ENCODE measurements at regions of chr19 and their contacts with region 1.

Region 1: DNA sequence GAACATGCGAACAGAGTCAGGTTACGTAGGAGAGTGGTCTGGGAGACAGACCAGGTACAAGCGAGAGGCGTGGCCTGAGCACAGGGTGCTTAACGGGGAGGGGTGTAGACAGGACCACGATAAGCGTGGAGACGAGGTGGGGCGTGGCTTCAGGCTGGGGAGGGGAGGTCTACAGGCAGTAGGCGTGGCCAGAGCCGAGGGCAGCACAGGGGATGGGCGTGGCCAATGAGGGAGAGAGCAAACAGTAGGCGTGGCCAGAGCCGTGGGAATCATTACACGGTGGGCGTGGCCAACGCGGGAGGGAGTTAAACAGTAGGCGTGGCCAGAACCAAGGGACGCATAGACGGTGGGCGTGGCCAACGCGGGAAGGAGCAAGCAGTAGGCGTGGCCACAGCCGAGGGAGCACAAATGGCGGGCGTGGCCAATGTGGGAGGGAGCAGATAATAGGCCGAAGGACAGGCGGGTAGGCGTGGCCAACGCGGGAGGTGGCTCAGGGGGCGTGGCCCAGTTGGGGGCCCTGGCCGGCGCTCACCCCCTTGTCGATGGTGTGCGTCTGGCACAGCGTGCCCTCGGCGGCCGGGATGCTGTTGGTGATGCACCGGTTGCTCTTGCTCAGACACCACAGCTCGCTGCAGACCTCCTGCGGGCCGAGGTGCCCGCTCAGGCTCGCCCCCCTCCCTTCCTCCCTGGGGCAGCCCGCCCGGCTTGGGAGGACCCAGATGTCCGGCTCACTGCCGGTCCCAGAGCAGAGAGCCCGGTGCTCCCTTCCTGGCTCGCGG is 15.2 kb upstream of the MYO1F start:
- DNase-seq: peak; percentile 60 to 98
- ATAC-seq: peak; percentile 82 to 93
- H3K4me3 ChIP-seq: peak overlapping the region; percentile 42
- H3K27ac ChIP-seq: peak overlapping the region; percentile 80 to 95
- H3K4me1 ChIP-seq: peaks cover 25% of the 10 kb centered on the region
- CTCF ChIP-seq: no peak
- EP300 ChIP-seq: no peak
- POLR2A ChIP-seq: 0 out of 2 replicates have a peak, but pooled peaks have one; percentile 19
- RAD21 ChIP-seq: no peak

Region 2: DNA sequence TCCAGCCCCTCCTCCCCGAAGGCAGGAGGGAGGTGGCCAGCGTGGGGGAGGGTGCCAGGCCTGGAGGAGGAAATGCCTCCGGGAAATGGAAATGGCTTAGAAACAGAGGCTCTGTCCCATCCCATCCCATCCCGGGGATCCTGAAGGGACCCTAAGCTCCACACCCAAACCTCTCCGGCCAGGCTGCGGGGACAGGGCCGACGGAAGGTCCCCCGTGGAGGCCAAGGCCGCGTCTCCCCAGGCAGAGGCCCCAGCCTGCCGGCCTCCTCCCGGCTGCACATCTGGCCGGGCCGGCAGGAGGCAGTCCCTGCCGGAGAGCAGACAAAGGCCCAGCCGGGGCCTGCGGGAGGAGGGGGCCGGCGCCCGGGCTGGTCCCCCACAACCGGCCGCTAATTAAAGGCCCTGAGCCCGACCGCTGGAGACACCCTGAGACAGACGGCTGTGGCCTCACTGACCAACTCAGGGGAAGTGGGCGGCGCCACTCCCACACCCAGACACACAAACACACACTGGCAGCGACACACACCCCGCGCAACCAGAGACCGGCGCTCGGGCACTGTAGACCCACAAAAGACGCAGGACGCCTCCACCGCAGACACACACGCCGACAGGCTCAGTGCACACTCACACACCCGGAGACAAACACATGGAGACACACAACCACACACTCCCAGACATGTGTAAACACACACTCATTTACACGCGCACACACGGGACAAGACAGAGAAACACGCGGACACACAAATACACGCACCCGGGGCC is 17.0 kb after region 1 on chr19:
- CTCF ChIA-PET with region 1: interaction called, 32 read pairs
- POLR2A ChIA-PET with region 1: interaction called, 6 read pairs
- DNase-seq: peak; percentile 44 to 91
- ATAC-seq: peak; percentile 72
- H3K4me3 ChIP-seq: peak overlapping the region; percentile 58
- H3K27ac ChIP-seq: peak overlapping the region; percentile 98 to 99
- H3K4me1 ChIP-seq: peaks cover 45% of the 10 kb centered on the region
- CTCF ChIP-seq: no peak
- EP300 ChIP-seq: no peak
- POLR2A ChIP-seq: no peak
- RAD21 ChIP-seq: peak in 1 of 2 experiments; percentile 16; a peak in 1 of 5 replicates

Region 3: DNA sequence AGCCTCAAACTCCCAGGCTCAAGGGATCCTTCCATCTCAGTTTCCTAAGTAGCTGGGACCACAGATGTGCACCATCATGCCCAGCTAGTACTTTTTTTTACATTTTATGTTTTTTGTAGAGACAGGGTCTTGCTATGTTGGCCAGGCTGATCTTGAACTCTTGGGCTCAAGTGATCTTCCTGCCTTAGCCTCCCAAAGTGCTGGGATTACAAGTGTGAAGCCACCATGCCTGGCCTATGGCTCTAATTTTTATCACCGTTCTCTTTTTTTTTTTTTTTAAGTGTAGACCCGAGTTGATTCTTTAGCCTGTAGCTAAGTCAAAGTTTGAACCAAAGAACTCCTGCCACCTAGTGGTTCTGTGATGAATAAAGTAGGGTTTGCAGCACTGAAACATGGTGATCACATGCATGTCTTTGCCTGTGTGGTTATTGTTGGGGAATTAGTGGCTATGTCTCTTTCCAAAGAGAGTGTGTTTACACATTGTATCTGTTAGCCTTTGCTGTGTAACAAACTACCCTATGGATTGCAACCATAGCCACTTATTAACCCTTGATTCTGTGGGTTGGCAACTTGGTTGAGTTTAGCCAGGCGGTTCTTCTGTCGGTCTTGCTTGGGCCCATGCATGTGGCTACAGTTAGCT is 49.6 kb after region 1 on chr19:
- CTCF ChIA-PET with region 1: interaction called, 10 read pairs
- POLR2A ChIA-PET with region 1: no interaction called
- DNase-seq: peak; percentile 38 to 68
- ATAC-seq: no peak
- H3K4me3 ChIP-seq: no peak overlapping the region
- H3K27ac ChIP-seq: peak overlapping the region; percentile 94 to 98
- H3K4me1 ChIP-seq: peaks cover 36% of the 10 kb centered on the region
- CTCF ChIP-seq: 0 out of 3 replicates have a peak, but pooled peaks have one; percentile 14
- EP300 ChIP-seq: no peak
- POLR2A ChIP-seq: no peak
- RAD21 ChIP-seq: peak in 1 of 2 experiments; percentile 58; a peak in 3 of 5 replicates

Region 4: DNA sequence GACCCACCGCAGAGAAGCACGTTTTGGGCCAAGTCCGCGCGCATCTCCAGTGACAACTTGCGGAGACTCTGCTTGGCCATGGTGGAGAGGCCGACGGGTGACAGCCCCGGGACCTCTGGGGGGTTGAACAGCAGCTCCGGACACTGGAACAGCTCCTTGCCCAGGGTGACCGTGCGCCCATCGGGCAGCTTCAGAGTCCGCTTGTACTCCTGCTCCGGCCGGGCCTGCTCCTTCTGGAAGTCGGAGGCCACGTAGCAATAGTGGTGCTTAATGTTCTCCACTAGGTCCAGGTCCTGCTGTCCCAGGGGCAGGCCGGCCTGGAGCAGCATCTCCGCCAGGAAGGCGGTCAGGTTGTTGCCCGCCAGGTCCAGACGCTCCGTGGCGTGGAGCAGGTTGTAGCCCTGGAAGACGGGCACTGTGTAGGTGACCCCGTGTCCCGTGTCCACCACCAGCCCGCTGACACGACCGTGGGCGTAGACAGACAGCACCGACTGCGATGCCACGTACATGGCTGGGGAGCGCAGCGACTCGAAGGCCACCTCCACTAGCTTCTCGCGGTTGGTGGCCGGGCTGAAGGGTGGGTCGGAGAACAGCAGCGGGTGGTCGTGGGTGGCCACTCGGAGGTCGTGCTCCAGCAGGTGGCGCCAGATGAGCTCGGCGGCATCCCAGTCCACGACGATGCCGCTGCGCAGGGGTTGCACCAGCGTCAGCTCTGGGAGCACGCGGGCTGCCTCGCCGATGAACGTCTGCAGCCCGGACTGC is 105.4 kb after region 1 on chr19:
- CTCF ChIA-PET with region 1: interaction called, 20 read pairs
- POLR2A ChIA-PET with region 1: no interaction called
- DNase-seq: no peak
- ATAC-seq: no peak
- H3K4me3 ChIP-seq: no peak overlapping the region
- H3K27ac ChIP-seq: no peak overlapping the region
- H3K4me1 ChIP-seq: 0 out of 3 replicates have a peak, but pooled peaks cover 2% of the 10 kb centered on the region
- CTCF ChIP-seq: 0 out of 3 replicates have a peak, but pooled peaks have one; percentile 12
- EP300 ChIP-seq: no peak
- POLR2A ChIP-seq: no peak
- RAD21 ChIP-seq: 0 out of 5 replicates have a peak, but pooled peaks of 1 of the 2 experiments have one; percentile 16